ENCODE measurements at regions of chr18 and their contacts with region 1.

Region 1: DNA sequence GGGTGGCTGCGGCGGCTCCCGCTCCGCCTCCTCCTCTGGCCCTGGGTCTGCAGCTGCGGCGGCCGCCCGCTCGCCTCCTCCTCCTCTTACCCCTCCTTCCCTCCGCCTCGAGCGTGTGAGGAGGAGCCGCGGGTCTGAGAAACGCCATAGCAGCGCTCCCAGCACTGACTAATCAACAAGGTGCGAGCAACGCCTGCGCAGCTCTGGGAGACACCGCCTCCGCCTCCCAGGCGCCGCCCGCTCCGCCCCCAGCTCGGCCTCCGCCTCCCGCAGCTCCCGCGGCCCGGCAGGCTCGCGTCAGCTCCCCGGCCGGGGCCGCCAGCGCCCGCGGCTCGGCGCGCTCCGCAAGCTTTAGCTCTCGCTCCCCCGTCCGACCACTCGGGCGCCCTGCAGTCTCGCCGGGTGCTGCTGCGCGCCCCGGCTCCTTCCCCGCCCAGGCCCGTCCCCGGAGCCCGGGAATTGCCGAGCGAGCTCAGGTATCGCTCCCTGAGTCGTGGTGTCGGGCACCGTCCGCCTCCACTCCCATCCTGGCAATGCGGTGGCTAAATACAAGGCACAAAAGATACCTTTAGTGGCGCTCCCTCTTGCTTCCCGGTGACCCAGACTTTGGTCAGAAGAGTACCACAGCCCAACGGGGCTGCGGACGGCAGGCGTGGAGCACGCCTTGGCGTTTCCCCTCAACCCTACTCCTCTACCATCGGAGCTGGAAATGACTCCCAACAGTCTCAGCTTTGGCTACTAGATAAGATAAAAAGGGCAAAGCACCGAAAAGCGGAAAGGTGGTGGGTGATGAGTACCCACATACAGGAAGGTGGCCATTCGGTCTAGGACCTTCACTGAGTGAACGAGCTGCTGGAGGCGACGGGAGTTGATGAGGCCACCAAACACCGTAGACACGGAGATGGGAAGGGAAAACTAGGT is at the start of gene GAREM1:
- DNase-seq: peak; percentile 95 to 96
- ATAC-seq: peak; percentile 89 to 90
- H3K4me3 ChIP-seq: peak within 1 kb of the TSS; percentile 76 to 85 (median 81)
- H3K27ac ChIP-seq: peak within 1 kb of the TSS; percentile 82 to 92 (median 88)
- H3K4me1 ChIP-seq: peaks cover 22 to 36% of the 10 kb centered on the region in 2 donors
- H3K27me3 ChIP-seq: no peaks in the 10 kb centered on the region
- CTCF ChIP-seq: peak; percentile 71 to 91 (median 83)
- POLR2A ChIP-seq: peak; percentile 95 to 97
- total RNA-seq, gene GAREM1: 13.4 to 21.9 (median 16.4) TPM

Region 2: GRCh38 chr18:32092422-32093101 is 378.4 kb before region 1 on chr18:
- in situ Hi-C with region 1: no loop called
- intact Hi-C with region 1: loop called (anchors 5 kb)
- DNase-seq: peak; percentile 98
- ATAC-seq: peak; percentile 82 to 85
- H3K4me3 ChIP-seq: peak overlapping the region; percentile 85 to 97 (median 92)
- H3K27ac ChIP-seq: peak overlapping the region; percentile 98 to 100 (median 100)
- H3K4me1 ChIP-seq: peaks cover 40 to 43% of the 10 kb centered on the region in 2 donors
- H3K27me3 ChIP-seq: no peaks in the 10 kb centered on the region
- CTCF ChIP-seq: no peak
- POLR2A ChIP-seq: peak; percentile 64 to 80

Region 3: DNA sequence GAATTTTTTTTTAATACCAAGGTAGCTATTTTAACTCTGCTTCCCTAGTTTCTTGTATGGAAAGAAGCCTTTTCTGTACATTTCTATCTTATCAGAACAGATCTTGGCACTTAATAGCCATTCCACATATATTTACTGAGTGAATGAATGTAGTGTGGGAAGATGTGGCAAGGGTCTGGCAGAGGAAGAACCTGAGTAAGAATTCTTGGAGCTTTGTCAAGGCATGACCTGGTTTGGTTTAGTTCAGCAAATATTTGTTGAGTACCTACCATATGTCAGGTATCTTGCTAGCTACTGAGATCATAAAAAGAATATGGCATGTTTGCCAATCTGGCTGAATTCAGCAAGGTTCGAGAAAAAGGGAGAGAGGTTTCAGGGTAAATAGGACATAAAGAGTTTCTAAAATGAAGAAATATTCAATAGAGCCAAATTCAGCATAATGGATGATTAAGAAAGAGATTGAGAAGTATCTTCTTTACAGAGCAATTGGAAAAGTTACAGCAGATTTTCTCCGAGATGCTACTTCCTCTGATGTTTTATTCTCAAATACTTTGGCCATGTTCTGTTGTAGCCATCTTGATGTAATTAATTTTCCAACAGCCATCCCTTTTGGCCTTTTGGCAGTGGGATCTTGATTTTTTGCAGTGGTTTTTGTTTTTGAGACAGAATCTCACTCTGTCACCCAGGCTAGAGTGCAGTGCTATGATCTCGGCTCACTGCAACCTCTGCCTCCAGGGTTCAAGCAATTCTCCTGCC is 302.8 kb before region 1 on chr18:
- in situ Hi-C with region 1: loop called in 1 of 4 experiments (anchors 10 kb)
- intact Hi-C with region 1: no loop called
- DNase-seq: no peak
- ATAC-seq: no peak
- H3K4me3 ChIP-seq: no peak overlapping the region
- H3K27ac ChIP-seq: no peak overlapping the region
- H3K4me1 ChIP-seq: no peaks in the 10 kb centered on the region
- H3K27me3 ChIP-seq: no peaks in the 10 kb centered on the region
- CTCF ChIP-seq: no peak
- POLR2A ChIP-seq: no peak

Region 4: DNA sequence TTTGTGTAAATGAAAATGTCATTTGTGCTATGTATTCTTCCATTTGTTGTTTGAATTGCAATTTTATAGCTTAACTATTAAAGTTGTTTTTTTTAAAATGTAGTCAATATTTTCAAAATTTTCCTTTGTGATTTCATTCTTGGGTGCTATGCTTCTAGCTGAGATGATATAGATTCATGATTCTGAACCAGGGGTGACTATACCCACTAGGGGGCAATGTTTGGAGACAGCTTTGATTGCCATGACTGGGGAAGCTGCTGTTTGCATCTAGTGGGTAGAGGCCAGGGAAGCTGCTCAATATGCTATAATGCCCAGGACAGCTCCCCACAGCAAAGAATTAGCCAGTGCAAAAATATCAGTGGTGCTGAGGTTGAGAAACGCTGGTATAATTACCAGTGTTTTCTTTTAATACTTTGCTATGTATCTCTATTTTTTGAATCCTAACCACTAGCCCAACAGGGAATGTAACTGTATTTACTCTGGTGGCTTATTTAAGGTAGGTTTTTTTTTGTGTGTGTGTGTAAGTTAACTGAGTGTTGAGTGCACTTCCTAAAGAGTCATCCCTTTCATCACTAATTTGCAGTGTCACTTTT is 181.4 kb before region 1 on chr18:
- in situ Hi-C with region 1: loop called (anchors 5 to 10 kb)
- intact Hi-C with region 1: loop called (anchors 1 kb)
- DNase-seq: peak in 1 of 2 donors; percentile 42
- ATAC-seq: peak; percentile 58 to 73
- H3K4me3 ChIP-seq: no peak overlapping the region
- H3K27ac ChIP-seq: no peak overlapping the region
- H3K4me1 ChIP-seq: peaks cover 0 to 5% of the 10 kb centered on the region in 2 donors
- H3K27me3 ChIP-seq: no peaks in the 10 kb centered on the region
- CTCF ChIP-seq: peak; percentile 47 to 69 (median 53)
- POLR2A ChIP-seq: no peak

Region 5: DNA sequence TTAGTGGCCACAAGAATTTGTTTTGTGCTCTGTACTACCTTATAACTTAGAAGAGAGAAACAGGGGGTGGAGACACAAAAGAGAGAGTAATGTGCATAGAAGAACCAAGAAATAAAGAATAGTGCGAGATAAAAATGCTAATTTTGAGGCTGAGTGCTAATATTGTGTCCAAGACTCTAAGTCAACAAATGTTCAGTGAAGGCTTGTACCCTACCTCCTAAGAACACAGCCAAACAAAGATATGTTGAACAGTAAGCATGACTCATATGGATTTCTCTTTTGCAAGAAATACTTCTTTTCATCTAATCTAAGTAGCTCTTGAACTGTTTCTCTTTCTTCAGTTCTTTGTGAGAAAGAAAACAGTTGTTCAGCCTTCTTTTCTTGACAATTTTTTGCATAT is 45.5 kb before region 1 on chr18:
- in situ Hi-C with region 1: no loop called
- intact Hi-C with region 1: no loop called
- DNase-seq: no peak
- ATAC-seq: no peak
- H3K4me3 ChIP-seq: no peak overlapping the region
- H3K27ac ChIP-seq: no peak overlapping the region
- H3K4me1 ChIP-seq: peaks cover 47 to 72% of the 10 kb centered on the region in 2 donors
- H3K27me3 ChIP-seq: no peaks in the 10 kb centered on the region
- CTCF ChIP-seq: no peak
- POLR2A ChIP-seq: no peak

Region 6: GRCh38 chr18:32552421-32553030 is 81.6 kb after region 1 on chr18:
- in situ Hi-C with region 1: no loop called
- intact Hi-C with region 1: loop called (anchors 5 kb)
- DNase-seq: peak; percentile 39 to 46
- ATAC-seq: peak; percentile 81 to 84
- H3K4me3 ChIP-seq: no peak overlapping the region
- H3K27ac ChIP-seq: no peak overlapping the region
- H3K4me1 ChIP-seq: no peaks in the 10 kb centered on the region
- H3K27me3 ChIP-seq: no peaks in the 10 kb centered on the region
- CTCF ChIP-seq: peak; percentile 61 to 81 (median 75)
- POLR2A ChIP-seq: no peak